ENCODE measurements at regions of chr7 and their contacts with region 1.

Region 1: DNA sequence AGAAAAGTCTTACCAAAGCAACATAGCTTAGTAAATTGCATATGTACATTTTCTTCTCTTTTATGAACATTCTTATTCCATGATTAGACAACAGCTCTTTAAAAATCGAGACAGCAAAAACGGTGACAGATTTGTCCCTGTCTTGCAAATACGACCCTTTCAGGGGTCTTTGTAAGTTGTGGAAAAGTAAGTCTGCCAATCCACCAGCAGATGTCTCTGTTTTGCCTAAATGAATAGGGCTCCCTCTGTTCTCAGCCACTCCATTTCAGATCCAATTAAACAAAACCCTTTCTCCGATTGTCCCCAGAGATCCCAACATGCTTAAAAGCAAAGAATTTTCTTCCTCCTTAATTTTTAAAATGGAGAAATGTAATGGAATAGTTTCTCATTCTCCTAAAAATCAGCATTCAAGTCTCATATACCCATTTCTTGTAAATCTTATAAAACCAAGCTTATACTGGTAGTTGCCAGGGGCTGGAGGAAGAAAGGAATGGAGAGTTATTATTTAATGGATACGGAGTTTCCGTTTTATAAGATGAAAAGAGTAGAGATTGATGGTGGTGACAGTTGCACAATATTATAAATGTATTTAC is 61.0 kb upstream of the NFE2L3 start:
- DNase-seq: no peak
- ATAC-seq: peak; percentile 78
- H3K4me3 Mint-ChIP-seq: peak overlapping the region; percentile 52
- H3K27ac Mint-ChIP-seq: peak overlapping the region; percentile 91
- H3K4me1 Mint-ChIP-seq: peaks cover 21% of the 10 kb centered on the region
- H3K27me3 Mint-ChIP-seq: no peaks in the 10 kb centered on the region
- CTCF ChIP-seq: peak; percentile 26; the same call in 1 of the 2 replicates

Region 2: DNA sequence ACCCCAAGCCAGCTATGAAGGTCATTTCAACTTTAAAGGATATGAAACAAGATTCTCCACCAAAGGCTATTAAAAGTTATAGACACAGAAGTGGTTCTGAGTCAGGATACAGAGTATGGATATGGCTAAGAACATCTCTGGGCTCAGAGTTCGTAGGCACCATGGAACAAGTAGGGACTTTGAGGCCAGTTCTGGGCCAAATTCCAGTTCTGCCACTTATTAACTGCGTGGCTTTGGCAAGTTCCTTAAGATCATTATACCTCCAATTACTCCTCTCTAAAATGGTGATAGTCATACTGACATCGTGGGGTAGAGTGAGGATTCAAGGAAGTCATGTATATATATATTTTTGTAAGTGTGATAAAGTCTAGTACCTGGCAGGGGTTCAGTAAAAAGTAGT is 44.9 kb before region 1 on chr7:
- CTCF ChIA-PET with region 1: no interaction called
- POLR2A ChIA-PET with region 1: no interaction called
- DNase-seq: no peak
- ATAC-seq: no peak
- H3K4me3 Mint-ChIP-seq: no peak overlapping the region
- H3K27ac Mint-ChIP-seq: no peak overlapping the region
- H3K4me1 Mint-ChIP-seq: peaks cover 11% of the 10 kb centered on the region; the same call in 1 of the 2 replicates
- H3K27me3 Mint-ChIP-seq: no peaks in the 10 kb centered on the region
- CTCF ChIP-seq: no peak

Region 3: DNA sequence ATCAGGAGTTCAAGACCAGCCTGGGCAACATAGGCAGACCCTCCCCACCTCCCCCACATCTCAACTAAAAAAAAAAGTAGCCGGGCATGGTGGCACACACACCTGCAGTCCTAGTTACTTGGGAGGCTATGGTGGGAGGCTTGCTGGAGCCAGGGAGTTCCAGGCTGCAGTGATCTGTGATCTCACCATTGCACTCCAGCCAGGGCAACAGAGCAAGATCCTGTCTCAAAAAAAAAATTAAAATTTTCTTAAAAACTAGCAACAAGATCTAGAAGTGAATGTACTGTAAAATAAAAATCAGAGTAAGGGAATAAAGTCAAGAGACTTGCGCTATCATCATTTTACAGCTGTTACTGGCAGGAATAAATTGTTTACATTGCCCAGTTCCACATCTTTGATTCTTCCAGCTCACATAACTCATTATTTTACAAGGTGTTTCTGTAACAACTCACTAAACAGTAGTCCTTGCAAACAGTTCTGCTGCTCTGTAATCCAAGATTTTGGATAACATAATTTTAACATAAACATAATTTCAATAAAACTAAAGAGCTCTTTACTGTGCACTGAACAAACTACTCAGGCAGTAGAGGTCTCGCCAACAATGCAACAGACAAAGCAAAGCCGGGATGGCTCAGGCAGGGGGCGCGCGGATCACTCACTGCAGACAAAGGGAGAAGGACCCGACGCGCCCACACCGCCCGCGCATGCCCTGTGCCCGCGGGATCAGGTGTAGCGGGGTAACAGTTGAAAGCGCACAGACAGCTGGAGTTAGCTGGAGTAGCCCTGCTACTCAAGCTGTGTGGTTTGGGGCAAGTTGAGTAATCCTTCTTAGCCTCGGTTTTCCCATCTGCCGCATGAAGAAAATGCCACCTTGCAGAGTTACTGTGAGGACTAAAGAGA is 12.3 kb before region 1 on chr7:
- CTCF ChIA-PET with region 1: interaction called, 52 read pairs
- POLR2A ChIA-PET with region 1: no interaction called
- DNase-seq: peak; percentile 85
- ATAC-seq: peak; percentile 97
- H3K4me3 Mint-ChIP-seq: peak overlapping the region; percentile 20
- H3K27ac Mint-ChIP-seq: no peak overlapping the region
- H3K4me1 Mint-ChIP-seq: peaks cover 33% of the 10 kb centered on the region
- H3K27me3 Mint-ChIP-seq: no peaks in the 10 kb centered on the region; the same call in 1 of the 2 replicates
- CTCF ChIP-seq: no peak

Region 4: GRCh38 chr7:26101361-26102151 is 10.5 kb after region 1 on chr7:
- CTCF ChIA-PET with region 1: interaction called, 18 read pairs
- POLR2A ChIA-PET with region 1: no interaction called
- DNase-seq: peak; percentile 37
- ATAC-seq: peak; percentile 75
- H3K4me3 Mint-ChIP-seq: peak overlapping the region; percentile 35
- H3K27ac Mint-ChIP-seq: peak overlapping the region; percentile 75
- H3K4me1 Mint-ChIP-seq: peaks cover 34% of the 10 kb centered on the region
- H3K27me3 Mint-ChIP-seq: no peaks in the 10 kb centered on the region; the same call in 1 of the 2 replicates
- CTCF ChIP-seq: no peak

Region 5: DNA sequence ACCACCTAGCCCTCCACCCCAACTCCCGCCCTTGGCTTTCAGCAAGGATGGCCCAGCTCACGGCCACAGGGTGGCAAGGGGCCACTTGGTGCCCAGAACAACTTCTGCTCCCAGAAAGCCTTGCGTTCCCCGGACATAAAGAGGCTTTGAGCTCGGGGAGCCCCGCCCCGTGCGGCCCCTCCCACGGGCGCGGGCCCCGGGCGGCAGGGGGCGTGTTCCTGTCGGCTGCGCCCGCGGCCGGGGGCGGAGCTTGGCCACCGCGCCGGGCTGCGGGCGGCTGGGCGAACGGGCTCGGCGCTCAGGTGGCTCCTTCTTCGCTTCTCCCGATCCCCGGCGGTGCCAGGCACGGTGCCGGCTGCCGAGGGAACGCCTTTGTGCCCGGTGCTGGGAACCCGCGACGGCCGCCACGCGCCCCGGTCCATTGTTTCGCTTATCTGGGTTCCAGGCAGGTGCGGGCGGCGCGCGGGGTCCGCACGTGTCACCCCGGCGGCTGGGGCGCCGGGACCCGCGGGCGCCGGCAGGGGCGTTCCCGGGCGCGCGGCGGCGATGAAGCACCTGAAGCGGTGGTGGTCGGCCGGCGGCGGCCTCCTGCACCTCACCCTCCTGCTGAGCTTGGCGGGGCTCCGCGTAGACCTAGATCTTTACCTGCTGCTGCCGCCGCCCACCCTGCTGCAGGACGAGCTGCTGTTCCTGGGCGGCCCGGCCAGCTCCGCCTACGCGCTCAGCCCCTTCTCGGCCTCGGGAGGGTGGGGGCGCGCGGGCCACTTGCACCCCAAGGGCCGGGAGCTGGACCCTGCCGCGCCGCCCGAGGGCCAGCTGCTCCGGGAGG is 61.1 kb after region 1 on chr7 and contains the start of gene NFE2L3:
- CTCF ChIA-PET with region 1: interaction called, 10 read pairs
- POLR2A ChIA-PET with region 1: no interaction called
- DNase-seq: peak; percentile 73
- ATAC-seq: peak; percentile 69
- H3K4me3 Mint-ChIP-seq: peak within 1 kb of the TSS; percentile 89
- H3K27ac Mint-ChIP-seq: peak within 1 kb of the TSS; percentile 98
- H3K4me1 Mint-ChIP-seq: peaks cover 62% of the 10 kb centered on the region
- H3K27me3 Mint-ChIP-seq: peaks cover 4% of the 10 kb centered on the region
- CTCF ChIP-seq: no peak
- total RNA-seq, gene NFE2L3: 66.8 to 68.6 TPM (median 68.5 TPM) in 3 replicates

Region 6: GRCh38 chr7:26187380-26188205 is 96.6 kb after region 1 on chr7:
- CTCF ChIA-PET with region 1: interaction called, 14 read pairs
- POLR2A ChIA-PET with region 1: interaction called, 3 read pairs
- DNase-seq: no peak
- ATAC-seq: peak; percentile 36
- H3K4me3 Mint-ChIP-seq: no peak overlapping the region
- H3K27ac Mint-ChIP-seq: peak overlapping the region; percentile 97
- H3K4me1 Mint-ChIP-seq: peaks cover 55% of the 10 kb centered on the region
- H3K27me3 Mint-ChIP-seq: no peaks in the 10 kb centered on the region
- CTCF ChIP-seq: no peak

Region 7: DNA sequence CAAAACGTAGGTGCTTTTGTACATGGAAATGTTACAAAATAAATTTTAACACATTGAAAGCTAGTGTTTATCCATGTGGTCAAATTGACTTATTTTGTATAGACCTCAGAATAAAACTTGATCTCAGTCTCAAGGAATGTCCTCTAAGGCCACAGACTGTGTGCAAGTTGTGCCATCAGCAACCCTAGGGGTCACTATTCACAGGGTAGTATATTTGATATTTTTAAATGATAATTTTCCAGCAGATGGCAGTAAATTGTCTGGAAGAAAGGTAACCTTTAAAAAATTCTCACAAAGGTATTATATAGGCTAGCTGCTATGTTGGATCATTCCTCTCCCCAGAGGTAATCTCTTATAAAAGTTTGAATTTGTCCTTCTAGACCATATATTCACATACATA is 187.7 kb after region 1 on chr7:
- CTCF ChIA-PET with region 1: no interaction called
- POLR2A ChIA-PET with region 1: no interaction called
- DNase-seq: no peak
- ATAC-seq: no peak
- H3K4me3 Mint-ChIP-seq: no peak overlapping the region
- H3K27ac Mint-ChIP-seq: no peak overlapping the region
- H3K4me1 Mint-ChIP-seq: peaks cover 6% of the 10 kb centered on the region; the same call in 1 of the 2 replicates
- H3K27me3 Mint-ChIP-seq: no peaks in the 10 kb centered on the region
- CTCF ChIP-seq: no peak

Measured in WTC11 (cell line).